Heart right ventricle (tissue), 16 donors: ENCODE measurements at regions of chr1 and their contacts with region 1.

Region 1: DNA sequence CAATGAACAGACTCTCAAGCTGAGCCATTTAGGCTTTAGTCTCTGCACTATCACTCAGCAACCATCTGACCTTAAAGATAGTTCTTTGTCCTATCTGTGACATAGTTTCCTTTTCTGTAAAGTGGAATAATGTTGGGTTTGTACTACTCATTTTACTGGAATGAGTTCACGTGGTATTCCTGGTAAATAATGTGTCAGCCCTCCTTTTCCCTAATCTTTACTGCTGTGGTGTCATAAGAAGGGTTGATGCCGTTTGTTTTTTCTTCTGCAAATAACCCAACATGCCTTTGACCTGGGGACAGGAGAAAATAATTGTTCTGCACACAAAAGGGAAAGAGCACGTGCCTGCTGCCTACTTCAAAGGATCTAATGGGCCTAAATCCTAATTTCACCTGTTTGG is 297.8 kb downstream of the BRINP3 start:
- DNase-seq: no peak
- ATAC-seq: no peak
- H3K4me3 ChIP-seq: no peak overlapping the region
- H3K27ac ChIP-seq: no peak overlapping the region
- H3K4me1 ChIP-seq: no peaks in the 10 kb centered on the region
- H3K27me3 ChIP-seq: no peaks in the 10 kb centered on the region
- CTCF ChIP-seq: no peak

Region 2: GRCh38 chr1:189007824-189008223 is 1172.0 kb before region 1 on chr1:
- intact Hi-C with region 1: loop called in 1 of 10 experiments (anchors 10 kb)
- DNase-seq: no peak
- ATAC-seq: no peak
- H3K4me3 ChIP-seq: no peak overlapping the region
- H3K27ac ChIP-seq: no peak overlapping the region
- H3K4me1 ChIP-seq: no peaks in the 10 kb centered on the region
- H3K27me3 ChIP-seq: no peaks in the 10 kb centered on the region
- CTCF ChIP-seq: no peak

Region 3: DNA sequence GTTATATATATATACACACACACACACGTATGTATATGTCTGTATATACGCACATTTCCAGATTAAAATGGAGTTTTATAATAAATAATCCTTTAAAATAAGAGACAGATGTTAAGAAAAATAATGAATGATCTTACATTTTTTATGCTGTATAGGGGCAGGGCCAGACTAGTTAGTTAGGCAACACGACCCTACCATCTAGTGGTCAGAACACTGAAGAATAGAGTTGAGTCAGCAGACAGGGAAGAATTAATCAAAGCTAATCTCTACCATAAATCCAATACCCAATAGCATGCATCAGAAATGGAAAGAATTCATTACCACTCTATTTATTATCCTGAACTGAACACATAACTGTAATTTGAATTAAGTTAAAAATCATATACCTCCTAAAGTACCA is 141.1 kb after region 1 on chr1:
- intact Hi-C with region 1: no loop called
- DNase-seq: no peak
- ATAC-seq: no peak
- H3K4me3 ChIP-seq: no peak overlapping the region
- H3K27ac ChIP-seq: no peak overlapping the region
- H3K4me1 ChIP-seq: no peaks in the 10 kb centered on the region
- H3K27me3 ChIP-seq: no peaks in the 10 kb centered on the region
- CTCF ChIP-seq: no peak